CD8-positive, alpha-beta T cell (primary cell): ENCODE measurements at regions of chr9 and their contacts with region 1.

Region 1: DNA sequence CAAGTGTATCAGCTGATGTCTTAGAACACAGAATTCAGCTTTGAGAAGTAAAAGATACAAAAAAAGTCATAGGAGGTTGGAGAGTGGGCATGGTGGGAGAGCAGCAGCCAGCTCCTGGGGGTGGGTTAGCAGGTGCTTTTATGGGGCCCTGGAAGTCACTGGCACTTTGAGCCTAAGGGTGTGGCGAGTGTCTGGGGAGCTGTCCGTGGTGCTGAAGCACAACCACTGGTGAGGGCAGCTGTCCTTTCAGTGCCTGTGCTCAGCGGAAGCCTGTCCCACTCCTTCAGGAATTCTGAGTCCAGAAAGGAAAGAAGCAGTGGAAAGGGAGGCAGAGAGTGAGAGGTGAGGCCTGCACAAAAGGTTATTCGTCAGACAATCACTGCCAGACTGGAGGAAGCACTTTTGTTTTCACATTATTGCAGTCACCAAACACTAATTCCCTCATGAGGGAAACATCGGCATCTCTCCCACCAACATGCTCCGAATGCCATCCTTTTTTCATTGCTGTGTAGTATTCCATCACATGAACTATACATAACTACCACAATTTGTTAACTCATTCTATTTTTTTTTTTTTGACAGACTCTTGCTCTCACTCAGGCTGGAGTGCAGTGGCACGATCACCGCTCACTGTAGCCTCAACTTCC is 59.4 kb upstream of the RAPGEF1 start:
- DNase-seq: peak; percentile 6 to 59 (median 45)
- ATAC-seq: peak; percentile 46
- H3K4me3 ChIP-seq: no peak overlapping the region
- H3K4me3 Mint-ChIP-seq: no peak overlapping the region
- H3K27ac ChIP-seq: no peak overlapping the region
- H3K27ac Mint-ChIP-seq: no peak overlapping the region
- H3K4me1 ChIP-seq: no peaks in the 10 kb centered on the region
- H3K4me1 Mint-ChIP-seq: no peaks in the 10 kb centered on the region
- H3K27me3 ChIP-seq: no peaks in the 10 kb centered on the region
- H3K27me3 Mint-ChIP-seq: peaks cover 32% of the 10 kb centered on the region
- CTCF ChIP-seq: no peak

Region 2: DNA sequence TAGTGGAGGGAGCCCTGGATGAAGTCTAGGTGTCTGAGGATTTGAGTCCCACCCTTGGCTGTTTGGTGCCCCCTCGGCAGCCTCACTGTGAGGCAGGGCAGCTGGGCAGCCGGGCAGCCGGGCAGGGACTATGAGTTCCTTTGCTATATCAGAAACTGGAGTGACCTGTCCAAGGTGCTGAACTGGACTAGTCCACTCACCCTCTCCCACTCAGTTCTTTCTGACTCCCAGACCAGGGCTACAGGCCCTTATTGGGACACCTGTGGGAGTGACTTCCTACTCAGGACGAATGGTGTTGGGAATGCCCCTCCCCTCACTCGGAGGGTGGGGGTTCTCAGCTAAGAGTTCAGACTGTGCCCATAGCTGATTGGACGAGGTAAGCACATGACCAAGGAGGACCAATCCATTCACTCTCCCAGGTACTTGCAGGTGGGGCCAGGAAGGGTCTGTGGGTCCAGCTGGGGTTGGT is 25.4 kb before region 1 on chr9:
- CTCF ChIA-PET with region 1: no interaction called
- POLR2A ChIA-PET with region 1: no interaction called
- intact Hi-C with region 1: loop called in 1 of 2 experiments (anchors 1 kb)
- DNase-seq: peak in 7 of 9 experiments; percentile 2 to 56 (median 23)
- ATAC-seq: no peak
- H3K4me3 ChIP-seq: no peak overlapping the region
- H3K4me3 Mint-ChIP-seq: no peak overlapping the region
- H3K27ac ChIP-seq: no peak overlapping the region
- H3K27ac Mint-ChIP-seq: no peak overlapping the region
- H3K4me1 ChIP-seq: no peaks in the 10 kb centered on the region
- H3K4me1 Mint-ChIP-seq: no peaks in the 10 kb centered on the region
- H3K27me3 ChIP-seq: no peaks in the 10 kb centered on the region
- H3K27me3 Mint-ChIP-seq: peaks cover 27% of the 10 kb centered on the region
- CTCF ChIP-seq: no peak

Region 3: GRCh38 chr9:132108728-132109127 is 309.4 kb after region 1 on chr9:
- CTCF ChIA-PET with region 1: no interaction called
- POLR2A ChIA-PET with region 1: no interaction called
- intact Hi-C with region 1: loop called in 1 of 2 experiments (anchors 5 kb)
- DNase-seq: no peak
- ATAC-seq: no peak
- H3K4me3 ChIP-seq: no peak overlapping the region
- H3K4me3 Mint-ChIP-seq: no peak overlapping the region
- H3K27ac ChIP-seq: no peak overlapping the region
- H3K27ac Mint-ChIP-seq: no peak overlapping the region
- H3K4me1 ChIP-seq: no peaks in the 10 kb centered on the region
- H3K4me1 Mint-ChIP-seq: no peaks in the 10 kb centered on the region
- H3K27me3 ChIP-seq: no peaks in the 10 kb centered on the region
- H3K27me3 Mint-ChIP-seq: peaks cover 30% of the 10 kb centered on the region
- CTCF ChIP-seq: no peak